ENCODE measurements at regions of chr18 and their contacts with region 1.

Region 1: DNA sequence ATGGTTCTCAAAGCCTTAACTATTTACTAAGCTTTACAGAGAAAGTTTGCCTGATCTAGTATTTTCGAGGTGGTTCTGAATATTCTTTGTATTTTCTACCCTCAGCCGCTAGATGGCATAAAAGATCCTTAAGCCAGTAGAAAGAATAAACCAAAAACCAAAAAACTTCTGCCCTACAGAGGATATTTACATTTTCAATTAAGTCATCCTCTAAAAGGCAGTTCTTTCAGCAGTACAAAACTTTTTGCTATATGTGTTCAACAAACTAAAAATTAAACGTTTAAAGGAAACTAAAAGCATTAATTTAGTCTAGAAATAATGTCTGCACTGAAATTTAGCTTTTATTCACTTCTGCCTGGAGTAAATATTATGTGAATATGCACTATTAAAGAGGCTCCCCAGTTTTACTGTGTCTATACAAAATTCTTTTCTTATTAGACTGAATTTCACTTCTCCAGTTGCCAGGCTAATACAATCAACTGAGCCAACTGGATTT is 297.5 kb downstream of the PIEZO2 start:
- DNase-seq: no peak
- H3K4me3 ChIP-seq: no peak overlapping the region
- H3K27ac ChIP-seq: no peak overlapping the region
- H3K4me1 ChIP-seq: no peaks in the 10 kb centered on the region
- H3K27me3 ChIP-seq: no peaks in the 10 kb centered on the region
- CTCF ChIP-seq: peak; percentile 40 to 77 (median 66)
- POLR2A ChIP-seq: no peak

Region 2: DNA sequence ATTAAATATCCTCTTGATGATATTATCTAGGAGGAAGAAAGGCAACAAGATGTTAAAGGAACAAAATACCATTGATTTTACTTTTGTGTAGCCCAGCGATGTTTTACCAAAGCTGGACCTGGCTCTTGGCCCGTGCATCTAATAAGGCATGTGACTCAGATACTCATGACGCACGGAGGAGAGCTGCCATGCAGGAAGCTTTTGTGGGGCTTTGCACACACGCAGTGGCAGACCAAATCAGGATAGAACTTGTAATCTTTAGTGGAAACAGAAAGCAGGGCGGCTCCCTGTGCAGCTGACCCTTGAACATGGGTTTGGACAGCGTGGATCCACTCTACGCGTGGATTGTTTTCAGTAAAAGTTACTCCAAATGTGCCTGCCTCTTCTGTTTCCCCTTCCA is 136.1 kb before region 1 on chr18:
- intact Hi-C with region 1: no loop called
- DNase-seq: no peak
- H3K4me3 ChIP-seq: peak overlapping the region in 1 of 4 donors; percentile 30
- H3K27ac ChIP-seq: peak overlapping the region in 3 of 4 donors; percentile 49 to 74 (median 62)
- H3K4me1 ChIP-seq: peaks cover 0 to 14% (median 0%) of the 10 kb centered on the region in 3 donors
- H3K27me3 ChIP-seq: no peaks in the 10 kb centered on the region
- CTCF ChIP-seq: no peak
- POLR2A ChIP-seq: no peak

Region 3: GRCh38 chr18:10776493-10776892 is 75.4 kb before region 1 on chr18:
- intact Hi-C with region 1: no loop called
- DNase-seq: no peak
- H3K4me3 ChIP-seq: no peak overlapping the region
- H3K27ac ChIP-seq: no peak overlapping the region
- H3K4me1 ChIP-seq: no peaks in the 10 kb centered on the region
- H3K27me3 ChIP-seq: no peaks in the 10 kb centered on the region
- CTCF ChIP-seq: no peak
- POLR2A ChIP-seq: no peak

Region 4: DNA sequence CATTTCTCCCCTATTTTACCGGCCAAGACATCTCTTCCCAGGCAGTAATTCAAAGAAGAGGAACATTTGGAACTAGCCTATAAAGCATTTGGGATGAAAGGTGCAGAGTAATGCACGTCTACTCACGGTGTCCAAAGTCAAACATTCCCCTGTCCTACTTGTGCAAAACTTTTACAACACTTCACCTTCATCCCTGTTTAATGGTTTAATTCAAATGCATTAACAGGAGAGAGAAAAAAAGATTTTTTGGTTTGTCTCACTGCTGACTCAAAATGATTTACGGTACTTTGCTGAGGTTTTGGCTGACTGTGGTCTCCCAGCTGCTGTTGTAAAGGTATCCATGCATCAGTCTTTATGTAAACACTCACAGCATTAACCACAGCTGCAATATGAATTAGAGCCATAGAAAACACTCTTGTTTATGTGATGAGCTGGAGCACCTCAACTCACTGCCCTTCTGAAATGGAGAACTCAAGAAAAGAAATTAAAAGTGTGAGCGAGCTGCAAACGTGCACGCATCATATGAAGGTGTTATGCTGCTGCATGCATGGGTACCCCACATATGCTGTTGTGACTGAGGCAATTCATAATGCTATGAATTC is 77.0 kb after region 1 on chr18:
- intact Hi-C with region 1: no loop called
- DNase-seq: no peak
- H3K4me3 ChIP-seq: no peak overlapping the region
- H3K27ac ChIP-seq: peak overlapping the region in 1 of 4 donors; percentile 78
- H3K4me1 ChIP-seq: peaks cover 0 to 17% (median 0%) of the 10 kb centered on the region in 3 donors
- H3K27me3 ChIP-seq: no peaks in the 10 kb centered on the region
- CTCF ChIP-seq: no peak
- POLR2A ChIP-seq: no peak

Region 5: DNA sequence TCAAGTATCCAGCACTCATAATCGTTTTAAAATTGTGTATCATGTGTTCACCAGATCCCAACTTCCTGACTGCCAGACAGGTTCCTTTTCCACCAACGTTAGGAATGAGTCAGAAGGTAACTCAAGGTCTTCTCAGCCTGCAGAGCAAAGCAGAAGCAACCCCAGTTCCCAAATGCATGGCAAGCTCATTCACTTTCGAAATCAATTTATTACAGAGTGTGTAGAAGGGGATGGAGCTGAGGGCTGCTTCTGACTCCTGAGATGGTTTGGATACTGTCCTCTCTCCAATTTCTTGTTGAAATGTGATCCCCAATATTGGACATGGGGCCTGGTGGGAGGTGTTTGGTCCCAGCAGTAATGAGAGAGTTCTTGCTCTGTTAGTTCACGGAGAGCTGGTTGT is 183.0 kb after region 1 on chr18:
- intact Hi-C with region 1: loop called (anchors 10 kb)
- DNase-seq: no peak
- H3K4me3 ChIP-seq: no peak overlapping the region
- H3K27ac ChIP-seq: no peak overlapping the region
- H3K4me1 ChIP-seq: peaks cover 0 to 9% (median 0%) of the 10 kb centered on the region in 3 donors
- H3K27me3 ChIP-seq: no peaks in the 10 kb centered on the region
- CTCF ChIP-seq: no peak
- POLR2A ChIP-seq: no peak

Region 6: DNA sequence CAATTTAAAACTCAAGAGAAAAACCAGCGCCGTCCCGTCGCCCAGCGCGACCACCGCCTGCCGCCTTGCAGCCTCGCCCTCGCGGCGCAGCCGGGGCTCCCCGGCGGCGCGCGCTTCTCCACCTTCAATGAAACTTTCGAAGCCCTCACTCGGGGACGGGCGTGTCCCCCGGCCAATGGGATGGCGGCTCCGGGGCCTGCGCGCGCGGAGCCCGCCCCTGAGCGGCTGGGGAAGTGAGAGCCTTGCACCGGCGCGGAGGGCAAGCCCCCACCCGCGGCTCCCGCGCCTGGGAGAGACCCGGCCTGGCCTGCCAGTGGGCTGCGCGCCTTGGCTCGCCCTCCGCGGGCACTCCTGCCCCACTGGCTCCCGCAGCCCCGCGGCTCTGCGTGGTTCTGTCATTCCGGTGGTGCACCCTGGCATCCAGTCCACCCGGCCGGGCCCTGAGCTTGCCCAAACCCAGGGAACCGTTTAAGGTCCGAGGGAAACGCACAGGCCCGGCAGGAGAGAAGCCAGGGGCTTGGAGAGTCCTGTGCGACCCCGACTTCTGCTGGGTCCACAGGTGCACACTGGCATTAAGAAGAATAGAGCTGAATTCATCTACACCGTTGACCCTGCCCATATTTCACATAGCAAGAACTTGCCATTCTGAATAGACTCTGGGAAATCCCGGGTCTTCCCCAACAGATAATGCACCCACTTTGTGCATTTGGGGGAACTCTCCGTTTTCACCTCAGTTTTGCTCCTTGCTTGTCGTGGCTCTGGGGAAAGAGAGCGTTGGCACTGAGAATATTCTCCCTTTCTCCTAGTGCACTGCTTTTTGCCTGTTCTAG is 297.8 kb after region 1 on chr18 and contains the start of gene PIEZO2:
- intact Hi-C with region 1: loop called (anchors 10 kb)
- DNase-seq: no peak
- H3K4me3 ChIP-seq: peak within 1 kb of the TSS; percentile 32 to 64 (median 44)
- H3K27ac ChIP-seq: peak within 1 kb of the TSS; percentile 32 to 76 (median 40)
- H3K4me1 ChIP-seq: peaks cover 4 to 42% (median 10%) of the 10 kb centered on the region in 3 donors
- H3K27me3 ChIP-seq: peaks cover 0 to 62% (median 7%) of the 10 kb centered on the region in 4 donors
- CTCF ChIP-seq: no peak
- POLR2A ChIP-seq: peak in 2 of 4 donors; percentile 46 to 49
- total RNA-seq, gene PIEZO2: 2.1 to 7.4 (median 2.5) TPM in 3 of 4 donors, not detected in the other

Region 7: DNA sequence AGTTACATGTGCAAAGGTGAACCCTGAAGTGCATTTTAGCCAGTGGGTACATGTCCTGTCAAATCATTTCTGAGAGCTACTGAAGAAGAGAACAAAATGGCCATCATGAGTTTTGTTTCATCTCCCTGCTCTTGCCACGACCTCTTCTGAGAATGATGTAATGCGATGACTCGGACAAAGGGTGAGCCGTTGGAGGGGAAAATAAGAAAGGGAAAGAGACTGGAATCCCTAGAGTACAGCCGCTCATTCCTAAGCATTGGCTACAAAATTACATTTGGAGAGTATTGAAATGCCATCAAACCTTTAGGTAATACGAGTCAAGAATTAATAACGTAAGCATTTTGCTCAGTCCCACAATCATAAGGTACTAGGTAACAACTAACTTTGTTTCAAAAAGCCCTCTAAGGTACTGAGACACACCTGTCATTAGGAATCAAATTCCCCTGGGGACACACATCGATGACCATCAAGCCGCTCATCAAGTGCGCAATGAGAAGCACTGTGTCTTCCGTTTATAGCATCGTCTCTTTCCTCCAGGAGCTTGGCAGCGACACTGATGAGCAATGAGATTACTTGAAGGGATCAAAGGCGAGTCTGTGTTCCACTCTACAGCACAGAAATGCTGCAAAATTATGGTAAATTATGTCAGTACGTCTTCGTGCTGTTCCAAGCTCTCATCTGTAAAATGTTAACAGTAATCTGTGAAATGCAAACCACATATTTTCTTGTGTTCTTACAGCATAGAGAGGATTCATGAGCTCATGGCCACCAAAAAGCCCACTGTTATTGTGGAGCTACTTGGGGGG is 394.8 kb after region 1 on chr18:
- intact Hi-C with region 1: no loop called
- DNase-seq: no peak
- H3K4me3 ChIP-seq: no peak overlapping the region
- H3K27ac ChIP-seq: no peak overlapping the region
- H3K4me1 ChIP-seq: no peaks in the 10 kb centered on the region
- H3K27me3 ChIP-seq: no peaks in the 10 kb centered on the region
- CTCF ChIP-seq: no peak
- POLR2A ChIP-seq: no peak